ENCODE measurements at regions of chr1 and their contacts with region 1.

Region 1: DNA sequence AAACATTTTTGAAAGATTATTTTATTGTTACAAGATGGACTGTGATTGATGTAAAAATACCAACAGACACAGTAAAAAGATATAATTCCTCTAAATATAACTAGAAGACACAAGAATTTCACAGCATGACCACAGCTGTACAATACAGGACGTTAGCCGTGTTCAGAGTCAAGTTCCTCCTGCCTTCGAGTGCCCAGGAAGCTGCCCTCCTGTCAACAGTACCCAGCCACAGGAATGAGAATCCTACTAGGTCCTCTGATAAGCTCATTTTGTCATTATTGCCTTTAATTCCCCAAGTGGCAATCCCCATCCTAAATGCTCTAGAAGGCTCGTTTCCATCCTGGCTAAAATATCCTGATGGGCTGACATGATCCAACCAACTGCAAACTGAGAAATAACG is 16.4 kb upstream of the CAPN2 start:
- DNase-seq: no peak
- H3K4me3 ChIP-seq: no peak overlapping the region
- H3K27ac ChIP-seq: no peak overlapping the region
- H3K4me1 ChIP-seq: peaks cover 4% of the 10 kb centered on the region
- H3K27me3 ChIP-seq: no peaks in the 10 kb centered on the region
- CTCF ChIP-seq: no peak

Region 2: GRCh38 chr1:223811634-223812415 is 115.9 kb after region 1 on chr1:
- CTCF ChIA-PET with region 1: no interaction called
- POLR2A ChIA-PET with region 1: no interaction called
- intact Hi-C with region 1: no loop called
- DNase-seq: peak; percentile 61
- H3K4me3 ChIP-seq: no peak overlapping the region
- H3K27ac ChIP-seq: no peak overlapping the region
- H3K4me1 ChIP-seq: no peaks in the 10 kb centered on the region
- H3K27me3 ChIP-seq: no peaks in the 10 kb centered on the region
- CTCF ChIP-seq: peak; percentile 63

Region 3: DNA sequence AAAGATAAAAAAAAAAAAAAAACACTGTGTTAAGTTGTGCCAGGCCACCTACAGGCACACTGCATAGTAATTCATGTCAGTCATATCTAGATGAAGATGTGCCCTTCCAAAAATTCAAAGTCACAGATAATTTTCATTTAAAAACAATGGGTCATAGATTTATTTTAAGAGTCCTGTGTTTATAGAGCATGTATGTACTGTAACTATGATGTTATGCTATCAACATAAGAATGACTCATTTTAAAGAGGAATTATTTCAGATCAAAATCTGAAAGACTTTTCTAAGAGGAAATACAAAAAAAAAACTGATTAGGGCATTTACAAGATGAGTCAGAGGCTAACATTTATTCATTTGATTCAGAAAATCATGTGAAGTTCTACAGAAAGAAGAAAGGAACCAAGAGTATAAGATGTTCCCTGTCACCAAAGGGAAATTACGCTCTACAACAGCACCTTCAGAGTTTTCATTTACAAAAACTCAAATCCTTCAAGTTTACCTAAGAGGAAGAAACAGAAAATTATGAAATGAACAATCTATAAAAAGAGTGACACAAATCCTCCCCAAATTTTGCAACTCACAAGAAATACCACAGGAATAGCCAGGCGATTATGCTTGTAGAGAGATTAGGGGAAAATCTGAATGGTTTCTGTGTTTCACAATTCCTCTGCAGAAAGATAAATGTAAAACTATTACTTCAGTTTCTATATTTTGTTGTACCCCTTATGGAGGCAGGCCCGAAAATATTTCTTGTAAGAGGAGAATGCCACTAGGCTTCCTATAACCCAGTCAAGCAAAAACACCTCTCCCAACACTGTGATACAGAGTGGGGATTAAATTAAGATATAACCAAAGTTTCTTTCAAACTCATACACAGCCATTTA is 136.1 kb after region 1 on chr1:
- CTCF ChIA-PET with region 1: no interaction called
- POLR2A ChIA-PET with region 1: no interaction called
- intact Hi-C with region 1: no loop called
- DNase-seq: peak; percentile 63
- H3K4me3 ChIP-seq: peak overlapping the region; percentile 2
- H3K27ac ChIP-seq: peak overlapping the region; percentile 72
- H3K4me1 ChIP-seq: peaks cover 64% of the 10 kb centered on the region
- H3K27me3 ChIP-seq: no peaks in the 10 kb centered on the region
- CTCF ChIP-seq: 0 out of 2 replicates have a peak, but pooled peaks have one; percentile 15

Region 4: DNA sequence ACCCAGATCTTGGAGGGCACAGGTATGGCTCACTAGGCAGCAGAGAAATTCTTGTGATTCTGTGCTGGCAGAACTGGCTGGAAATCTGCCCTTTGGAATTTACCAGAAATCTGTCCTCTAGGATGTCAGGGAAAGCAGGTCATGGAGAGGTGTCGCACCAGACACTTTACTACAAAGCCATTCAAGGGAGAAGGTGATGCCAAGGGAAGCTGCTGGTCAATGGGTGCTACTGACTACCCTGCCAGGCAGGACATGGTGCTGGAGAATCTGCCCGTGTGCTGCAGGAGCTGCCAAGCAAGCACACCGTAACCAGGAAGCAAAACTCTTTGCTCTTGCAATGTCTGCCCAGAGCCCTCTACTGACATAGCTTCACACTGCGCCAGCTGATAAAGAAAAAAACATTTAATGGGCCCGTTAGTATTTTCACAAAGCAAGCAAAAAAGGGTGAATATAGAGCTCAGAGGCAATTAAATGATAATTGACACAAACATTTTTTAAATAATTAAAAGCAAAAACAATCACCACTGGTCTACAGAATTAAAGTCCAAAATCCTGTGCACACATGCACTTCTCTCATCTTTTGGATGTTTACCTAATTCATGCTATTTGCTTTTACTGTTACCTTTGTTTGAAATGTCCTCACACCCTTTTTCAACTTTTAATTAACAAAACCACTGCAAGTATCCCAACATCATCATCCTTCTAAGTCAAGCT is 410.8 kb after region 1 on chr1:
- CTCF ChIA-PET with region 1: interaction called, 4 read pairs
- POLR2A ChIA-PET with region 1: no interaction called
- intact Hi-C with region 1: loop called (anchors 5 kb)
- DNase-seq: peak; percentile 75
- H3K4me3 ChIP-seq: no peak overlapping the region
- H3K27ac ChIP-seq: no peak overlapping the region
- H3K4me1 ChIP-seq: no peaks in the 10 kb centered on the region
- H3K27me3 ChIP-seq: no peaks in the 10 kb centered on the region
- CTCF ChIP-seq: peak; percentile 64